ENCODE measurements at regions of chr3 and their contacts with region 1.

Region 1: GRCh38 chr3:189967254-189967865 is 153.3 kb downstream of the P3H2 start:
- DNase-seq: no peak
- H3K4me3 Mint-ChIP-seq: no peak overlapping the region
- H3K27ac Mint-ChIP-seq: no peak overlapping the region
- H3K4me1 Mint-ChIP-seq: no peaks in the 10 kb centered on the region
- H3K27me3 Mint-ChIP-seq: peaks cover 6% of the 10 kb centered on the region

Region 2: GRCh38 chr3:189937307-189938124 is 29.8 kb before region 1 on chr3:
- CTCF ChIA-PET with region 1: no interaction called
- DNase-seq: no peak
- H3K4me3 Mint-ChIP-seq: no peak overlapping the region
- H3K27ac Mint-ChIP-seq: no peak overlapping the region
- H3K4me1 Mint-ChIP-seq: no peaks in the 10 kb centered on the region
- H3K27me3 Mint-ChIP-seq: no peaks in the 10 kb centered on the region

Region 3: GRCh38 chr3:190205739-190206138 is 238.4 kb after region 1 on chr3:
- CTCF ChIA-PET with region 1: interaction called, 29 read pairs
- DNase-seq: no peak
- H3K4me3 Mint-ChIP-seq: no peak overlapping the region
- H3K27ac Mint-ChIP-seq: no peak overlapping the region
- H3K4me1 Mint-ChIP-seq: no peaks in the 10 kb centered on the region
- H3K27me3 Mint-ChIP-seq: peaks cover 11% of the 10 kb centered on the region

Region 4: DNA sequence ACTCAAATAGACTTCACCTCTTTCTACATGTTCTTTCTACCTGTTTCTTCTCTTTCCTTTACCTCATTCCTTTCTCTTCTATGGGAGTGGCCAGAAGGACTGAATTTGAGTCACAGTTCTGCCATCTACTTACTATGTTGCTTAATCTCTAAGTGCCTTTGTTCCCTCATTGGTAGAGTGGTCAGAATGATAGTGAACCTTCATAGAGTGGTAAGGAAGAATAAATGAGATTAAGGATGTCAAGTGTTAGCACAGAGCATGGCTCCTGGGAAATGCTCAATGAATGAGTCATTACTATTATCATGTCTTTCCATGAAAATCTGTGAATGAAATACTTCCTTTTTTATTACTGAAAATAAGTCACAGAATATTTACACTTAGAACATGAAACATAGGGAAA is 464.9 kb after region 1 on chr3:
- CTCF ChIA-PET with region 1: no interaction called
- DNase-seq: no peak
- H3K4me3 Mint-ChIP-seq: no peak overlapping the region
- H3K27ac Mint-ChIP-seq: no peak overlapping the region
- H3K4me1 Mint-ChIP-seq: no peaks in the 10 kb centered on the region
- H3K27me3 Mint-ChIP-seq: peaks cover 12% of the 10 kb centered on the region

Measured in activated naive CD4-positive, alpha-beta T cell treated with anti-CD3 and anti-CD28 coated beads, Interleukin-2, amount 10 ng/mL, durations not matched to agents 7 days and 5 days (primary cell).